AG04449 (cell line): ENCODE measurements at regions of chr6 and their contacts with region 1.

Region 1: DNA sequence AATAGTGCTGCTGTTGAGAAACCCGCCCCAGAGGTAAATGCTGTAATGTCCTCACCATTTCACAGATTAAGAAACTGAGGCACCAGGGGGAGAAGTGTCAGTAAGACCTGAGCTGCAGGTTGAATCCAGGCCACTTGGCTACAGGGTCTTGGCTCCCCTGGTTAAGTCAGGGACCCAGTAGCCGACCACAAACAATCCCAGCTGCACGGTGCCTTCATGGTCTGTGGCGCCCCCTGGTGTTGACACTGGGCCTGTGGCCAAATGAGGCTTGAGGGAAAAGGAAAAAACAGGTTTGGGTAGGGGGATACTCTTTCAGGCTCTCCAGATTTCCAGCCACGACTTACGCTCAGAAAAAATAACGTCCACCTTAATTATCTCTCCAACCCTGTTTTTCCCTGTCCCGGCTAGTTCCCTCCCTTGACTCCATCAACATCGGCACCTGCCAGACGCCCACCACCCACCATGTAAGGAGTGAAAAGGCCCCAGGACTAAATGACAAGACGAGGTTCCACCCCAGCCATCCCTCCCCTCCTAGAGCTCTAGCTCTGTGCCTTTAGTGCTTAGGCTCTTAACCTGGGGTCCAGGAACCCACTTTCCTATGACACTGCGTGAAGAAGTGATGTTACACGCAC is 47.7 kb upstream of the POLR1H start:
- DNase-seq: no peak
- H3K4me3 ChIP-seq: no peak overlapping the region
- CTCF ChIP-seq: peak; percentile 58

Region 2: GRCh38 chr6:29839917-29840316 is 173.5 kb before region 1 on chr6:
- CTCF ChIA-PET with region 1: interaction called, 11 read pairs
- POLR2A ChIA-PET with region 1: no interaction called
- DNase-seq: no peak
- H3K4me3 ChIP-seq: no peak overlapping the region
- CTCF ChIP-seq: no peak

Region 3: GRCh38 chr6:30025186-30025585 is 11.8 kb after region 1 on chr6:
- CTCF ChIA-PET with region 1: interaction called, 12 read pairs
- POLR2A ChIA-PET with region 1: no interaction called
- DNase-seq: no peak
- H3K4me3 ChIP-seq: no peak overlapping the region
- CTCF ChIP-seq: no peak